ENCODE measurements at regions of chr7 and their contacts with region 1.

Region 1: DNA sequence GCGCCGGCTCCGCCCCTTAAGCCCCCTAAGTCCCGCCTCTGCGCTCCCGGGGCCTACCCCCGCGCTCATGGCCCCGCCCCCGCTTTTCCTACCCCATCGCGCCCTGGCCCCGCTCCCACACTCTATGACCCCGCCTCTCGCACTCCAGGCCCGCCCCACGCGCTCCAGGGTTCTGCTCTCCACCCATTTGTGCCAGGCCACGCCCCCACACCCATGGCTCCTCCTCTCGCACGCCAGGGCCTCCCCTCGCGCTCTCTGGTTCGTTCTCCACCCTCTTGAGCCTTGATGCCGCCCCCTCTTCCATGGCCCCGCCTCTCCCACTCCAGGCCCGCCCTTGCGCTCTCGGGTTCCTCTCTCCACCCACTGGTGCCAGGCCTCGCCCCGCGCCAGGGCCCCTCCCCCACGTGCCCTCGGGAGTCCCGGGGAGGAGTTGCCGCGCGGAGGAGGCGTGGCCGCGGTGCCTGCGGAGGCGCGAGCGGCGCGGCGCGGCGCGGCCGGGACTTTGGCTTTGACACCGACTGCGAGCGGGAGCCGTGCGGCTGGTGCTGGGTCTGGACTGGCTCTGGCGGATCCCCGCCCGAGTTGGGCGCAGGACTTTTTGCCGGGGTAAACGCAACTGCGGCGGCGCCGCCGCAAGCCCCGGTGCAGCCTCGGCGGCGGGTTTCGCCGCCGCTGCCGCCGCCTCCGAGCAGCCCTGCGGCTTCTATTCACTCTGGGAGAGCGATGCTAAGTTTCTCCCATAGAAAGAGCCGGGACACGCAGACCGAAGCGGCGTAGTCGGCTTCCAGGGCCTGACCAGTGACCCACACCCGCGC is at the start of gene EEPD1:
- DNase-seq: peak; percentile 100
- ATAC-seq: peak; percentile 98
- H3K4me3 ChIP-seq: peak within 1 kb of the TSS; percentile 57 to 94 (median 85)
- H3K27ac ChIP-seq: peak within 1 kb of the TSS; percentile 45 to 94 (median 83)
- H3K4me1 ChIP-seq: peaks cover 5 to 53% (median 36%) of the 10 kb centered on the region in 12 donors
- H3K27me3 ChIP-seq: no peaks in the 10 kb centered on the region
- CTCF ChIP-seq: peak in 1 of 12 donors; percentile 7
- POLR2A ChIP-seq: peak in 1 of 2 donors; percentile 80
- total RNA-seq, gene EEPD1: 3.7 to 12.2 (median 7.7) TPM

Region 2: DNA sequence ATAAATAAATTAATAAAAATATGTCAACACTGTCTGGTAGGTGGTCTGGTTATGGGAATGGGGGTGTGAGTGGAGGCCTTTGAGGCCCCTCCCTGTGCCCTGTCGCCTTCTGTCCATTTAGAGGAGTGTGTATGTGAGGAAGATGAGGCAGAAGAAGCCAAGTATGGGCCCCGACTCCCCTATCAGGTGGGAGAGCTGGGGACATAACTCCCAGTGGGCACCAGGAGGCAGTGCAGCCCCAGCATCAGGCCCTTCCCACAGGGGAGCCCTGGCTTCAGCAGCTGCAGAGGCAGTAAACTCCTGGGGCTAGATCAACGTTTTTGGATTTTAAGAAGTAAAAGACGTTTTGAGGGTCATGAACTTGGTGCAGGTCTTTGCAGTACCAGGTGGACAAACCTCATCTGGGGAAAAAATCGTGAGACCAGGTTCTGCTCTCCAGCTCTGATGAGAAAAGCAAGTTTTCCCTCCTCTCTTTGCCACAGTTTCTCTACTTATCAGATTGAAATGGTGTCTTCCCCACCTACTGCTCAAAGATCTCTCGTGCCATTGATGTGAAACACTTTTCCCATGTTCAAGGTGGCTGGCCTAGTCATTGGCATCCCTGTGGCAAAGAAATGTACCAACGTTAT is 167.7 kb before region 1 on chr7:
- intact Hi-C with region 1: loop called in 3 of 10 experiments (anchors 5 to 10 kb)
- DNase-seq: peak; percentile 83 to 88 (median 84)
- ATAC-seq: peak; percentile 94 to 99 (median 96)
- H3K4me3 ChIP-seq: no peak overlapping the region
- H3K27ac ChIP-seq: no peak overlapping the region
- H3K4me1 ChIP-seq: peaks cover 0 to 3% (median 0%) of the 10 kb centered on the region in 12 donors
- H3K27me3 ChIP-seq: no peaks in the 10 kb centered on the region
- CTCF ChIP-seq: peak; percentile 87 to 97 (median 92)
- POLR2A ChIP-seq: no peak

Region 3: DNA sequence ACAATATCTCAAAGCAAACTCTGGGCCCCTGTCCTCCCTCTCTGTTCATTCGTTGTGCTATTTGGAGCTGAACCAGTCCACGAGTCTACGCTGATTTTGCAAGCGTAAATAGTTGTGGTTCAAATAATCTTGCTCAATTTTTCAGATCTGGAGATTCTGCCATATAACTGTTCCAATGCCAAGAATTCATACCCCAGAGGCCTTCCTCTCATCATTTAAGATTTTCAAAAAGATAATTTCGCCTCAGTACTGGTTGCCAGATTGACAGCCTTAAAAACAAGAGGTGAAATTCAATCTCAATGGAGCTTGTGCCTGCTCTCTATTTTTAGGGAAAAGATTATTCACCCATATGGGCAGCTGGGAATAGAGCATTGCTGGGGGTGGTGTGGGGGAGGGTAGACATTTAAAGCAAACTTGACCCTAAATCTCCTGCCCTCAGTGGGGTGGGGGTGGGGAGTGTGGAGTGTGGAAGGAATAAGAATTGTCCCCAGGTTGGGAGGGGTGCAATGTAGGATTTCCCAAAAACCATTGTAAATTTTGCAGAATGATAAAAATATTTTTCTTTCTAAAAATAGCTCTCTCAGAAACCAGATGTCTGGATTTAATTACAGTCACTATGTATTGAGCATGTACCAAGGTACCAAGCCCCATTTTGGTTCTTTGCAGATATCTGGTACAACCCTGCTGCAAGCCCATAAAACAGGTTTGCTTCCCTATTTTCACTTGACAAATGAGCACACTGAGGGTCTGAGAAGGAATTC is 104.6 kb before region 1 on chr7:
- intact Hi-C with region 1: loop called in 1 of 10 experiments (anchors 2 kb)
- DNase-seq: peak in 1 of 5 donors; percentile 35
- ATAC-seq: peak; percentile 77 to 87 (median 84)
- H3K4me3 ChIP-seq: peak overlapping the region in 2 of 12 donors; percentile 5 to 13
- H3K27ac ChIP-seq: peak overlapping the region in 11 of 12 donors; percentile 3 to 83 (median 63)
- H3K4me1 ChIP-seq: peaks cover 2 to 61% (median 39%) of the 10 kb centered on the region in 12 donors
- H3K27me3 ChIP-seq: no peaks in the 10 kb centered on the region
- CTCF ChIP-seq: no peak
- POLR2A ChIP-seq: no peak

Region 4: GRCh38 chr7:36192053-36192824 is 39.3 kb after region 1 on chr7:
- intact Hi-C with region 1: loop called in 1 of 10 experiments (anchors 5 kb)
- DNase-seq: peak in 2 of 5 donors; percentile 31 to 42
- ATAC-seq: peak; percentile 14 to 63 (median 36)
- H3K4me3 ChIP-seq: no peak overlapping the region
- H3K27ac ChIP-seq: peak overlapping the region in 2 of 12 donors; percentile 63 to 69
- H3K4me1 ChIP-seq: peaks cover 3 to 47% (median 26%) of the 10 kb centered on the region in 12 donors
- H3K27me3 ChIP-seq: no peaks in the 10 kb centered on the region
- CTCF ChIP-seq: no peak
- POLR2A ChIP-seq: no peak

Region 5: DNA sequence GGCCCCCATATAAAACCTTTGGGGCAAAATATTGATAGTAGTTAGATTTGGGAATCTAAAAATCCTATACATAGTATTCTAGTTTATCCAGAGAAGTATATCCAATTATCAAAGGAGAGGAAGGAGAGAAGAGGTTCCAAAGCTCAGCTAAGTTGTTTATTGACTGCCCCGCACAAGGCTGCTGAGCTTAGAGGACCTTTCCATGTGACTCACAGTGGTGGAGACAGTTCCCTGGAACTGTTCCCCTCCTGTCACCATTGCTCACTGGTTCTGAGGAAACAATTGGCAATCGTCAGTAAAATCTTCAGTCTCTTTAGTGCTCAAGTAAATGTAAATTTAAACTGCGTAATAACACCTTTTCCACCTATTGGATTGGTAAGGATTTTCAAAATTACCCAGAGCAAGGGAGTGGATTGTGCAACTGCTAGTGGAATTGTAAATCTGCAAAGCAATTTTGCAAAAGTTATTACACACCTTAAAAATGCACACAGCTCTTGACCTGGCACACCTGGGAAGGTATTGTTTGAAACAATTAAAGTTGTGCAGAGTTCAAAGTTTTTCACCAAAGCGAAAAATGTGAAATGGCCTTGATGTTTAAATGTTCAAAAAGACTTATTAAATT is 63.2 kb after region 1 on chr7:
- intact Hi-C with region 1: no loop called
- DNase-seq: no peak
- ATAC-seq: peak in 3 of 4 donors; percentile 59 to 85 (median 73)
- H3K4me3 ChIP-seq: no peak overlapping the region
- H3K27ac ChIP-seq: no peak overlapping the region
- H3K4me1 ChIP-seq: peaks cover 0 to 18% (median 9%) of the 10 kb centered on the region in 12 donors
- H3K27me3 ChIP-seq: no peaks in the 10 kb centered on the region
- CTCF ChIP-seq: no peak
- POLR2A ChIP-seq: no peak

Region 6: DNA sequence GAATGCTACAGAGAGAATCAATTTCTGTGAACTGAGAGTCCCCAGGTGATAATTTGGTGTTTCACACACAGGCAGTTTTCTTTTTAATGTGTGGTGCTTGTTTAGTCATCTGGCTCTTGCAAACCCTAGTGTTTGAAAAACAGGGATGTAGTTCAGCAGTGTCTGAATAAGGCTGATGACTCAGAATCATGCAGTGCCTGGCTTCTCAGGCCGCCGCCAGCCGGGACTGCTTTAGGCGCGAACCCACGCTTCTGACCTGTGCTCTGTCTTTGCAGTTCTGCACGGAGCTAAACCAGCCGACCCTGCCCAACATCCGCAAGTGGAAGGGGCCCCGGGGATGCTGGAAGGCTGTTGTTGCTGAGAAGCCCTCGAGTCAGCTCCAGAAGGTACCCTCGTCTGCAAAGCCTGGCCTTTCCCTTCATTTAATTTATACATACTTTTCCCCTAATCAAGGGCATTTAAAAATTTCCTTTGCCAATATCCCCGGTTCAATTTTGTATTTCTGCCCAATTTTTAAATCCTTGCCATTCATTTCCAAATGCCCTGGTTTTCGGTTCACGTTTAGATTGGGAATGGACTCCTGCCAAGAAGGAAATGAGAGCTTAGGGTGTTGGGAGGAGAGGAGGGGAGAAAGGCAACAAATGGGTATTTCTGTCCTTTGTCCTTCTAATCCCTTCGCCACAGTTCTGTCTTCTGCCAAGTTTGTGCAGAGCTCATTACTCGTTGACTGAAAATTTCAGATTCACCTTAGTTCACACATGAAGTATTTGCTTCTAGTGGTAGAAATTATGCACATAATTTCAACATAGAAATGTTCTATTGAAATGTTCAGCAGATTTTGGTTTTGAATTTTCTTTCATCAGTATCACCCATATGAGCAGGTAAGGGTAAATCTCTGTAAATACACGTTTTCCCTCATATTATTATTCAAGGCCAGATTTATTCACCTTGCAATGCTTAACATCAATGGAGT is 128.2 kb after region 1 on chr7:
- intact Hi-C with region 1: loop called in 5 of 10 experiments (anchors 5 kb)
- DNase-seq: peak; percentile 60 to 82 (median 73)
- ATAC-seq: peak; percentile 79 to 90 (median 84)
- H3K4me3 ChIP-seq: peak overlapping the region in 5 of 12 donors; percentile 11 to 32 (median 22)
- H3K27ac ChIP-seq: peak overlapping the region in 10 of 12 donors; percentile 17 to 79 (median 60)
- H3K4me1 ChIP-seq: peaks cover 4 to 79% (median 51%) of the 10 kb centered on the region in 12 donors
- H3K27me3 ChIP-seq: no peaks in the 10 kb centered on the region
- CTCF ChIP-seq: peak in 1 of 12 donors; percentile 15
- POLR2A ChIP-seq: no peak